Esophagus muscularis mucosa (tissue), 4 donors: ENCODE measurements at regions of chr11 and their contacts with region 1.

Region 1: DNA sequence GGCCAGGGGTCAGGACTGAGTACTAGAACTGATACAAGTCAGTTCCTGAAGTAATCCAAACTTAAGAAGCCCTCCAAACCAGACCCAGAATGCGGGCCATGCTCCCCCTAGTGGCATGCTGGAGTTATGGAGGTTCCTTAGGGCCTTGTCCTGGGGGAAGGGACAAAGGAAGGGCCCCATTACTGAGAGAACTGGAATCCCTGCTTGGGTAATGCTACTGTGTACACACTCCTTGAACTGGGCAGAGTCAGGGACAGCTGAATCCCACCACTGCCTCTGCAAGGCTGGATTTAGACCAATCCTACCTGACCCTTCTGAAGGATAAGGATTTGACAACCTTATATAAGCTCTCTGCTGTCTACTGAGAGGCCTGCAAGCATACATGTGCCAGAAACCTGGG is 97.3 kb upstream of the AKIP1 start:
- DNase-seq: no peak
- H3K4me3 ChIP-seq: no peak overlapping the region
- H3K27ac ChIP-seq: peak overlapping the region; percentile 90 to 95 (median 93)
- H3K4me1 ChIP-seq: peaks cover 30 to 44% (median 39%) of the 10 kb centered on the region in 4 donors
- H3K27me3 ChIP-seq: no peaks in the 10 kb centered on the region
- CTCF ChIP-seq: peak; percentile 84 to 93 (median 88)
- EP300 ChIP-seq: no peak
- POLR2A ChIP-seq: no peak

Region 2: DNA sequence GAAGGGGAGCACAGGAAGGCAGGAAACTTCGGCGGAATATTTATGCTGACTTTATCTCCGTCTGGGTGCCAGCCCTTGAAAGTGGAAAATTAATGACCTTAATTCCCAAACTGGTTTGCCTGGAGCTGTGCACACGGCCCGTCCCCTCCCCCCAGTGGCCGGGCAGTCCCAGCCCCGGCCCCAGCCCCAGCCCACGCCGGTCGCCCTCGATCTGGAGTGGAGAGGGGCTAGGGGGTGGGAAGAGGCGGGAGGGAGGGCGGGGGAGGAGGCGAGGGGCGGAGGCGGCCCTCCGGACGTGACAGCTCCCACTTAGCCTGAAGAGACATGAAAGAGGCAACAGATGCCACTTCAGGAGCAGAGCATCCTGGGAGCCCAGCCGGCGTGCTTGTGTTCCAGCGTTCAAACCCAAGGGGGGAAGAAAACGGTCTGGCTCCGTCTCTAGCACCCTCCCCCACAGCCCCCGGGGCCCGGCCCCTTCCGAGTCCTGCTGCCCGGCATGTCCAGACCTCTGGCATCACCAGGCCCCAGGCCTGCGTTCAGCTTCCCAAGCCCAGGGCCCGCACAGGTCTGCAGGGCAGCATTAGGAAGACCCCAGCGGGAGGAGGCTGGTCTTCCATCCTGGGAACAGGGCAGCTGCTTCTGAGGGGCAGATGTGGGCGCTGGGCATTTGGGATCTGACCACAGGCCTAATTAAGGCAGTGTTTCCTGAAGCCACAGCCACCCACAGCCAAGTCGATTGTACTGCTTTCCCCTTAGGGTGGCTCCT is 530.0 kb before region 1 on chr11:
- intact Hi-C with region 1: no loop called
- DNase-seq: no peak
- H3K4me3 ChIP-seq: peak overlapping the region; percentile 44 to 53 (median 46)
- H3K27ac ChIP-seq: no peak overlapping the region
- H3K4me1 ChIP-seq: peaks cover 0 to 18% (median 14%) of the 10 kb centered on the region in 4 donors
- H3K27me3 ChIP-seq: no peaks in the 10 kb centered on the region
- CTCF ChIP-seq: no peak
- EP300 ChIP-seq: no peak
- POLR2A ChIP-seq: no peak

Region 3: GRCh38 chr11:8593935-8594909 is 219.4 kb before region 1 on chr11 and contains the start of gene STK33:
- intact Hi-C with region 1: loop called (anchors 10 kb)
- DNase-seq: no peak
- H3K4me3 ChIP-seq: peak within 1 kb of the TSS; percentile 72 to 76 (median 74)
- H3K27ac ChIP-seq: peak within 1 kb of the TSS; percentile 56 to 84 (median 72)
- H3K4me1 ChIP-seq: peaks cover 7 to 36% (median 17%) of the 10 kb centered on the region in 4 donors
- H3K27me3 ChIP-seq: peaks cover 0 to 10% (median 3%) of the 10 kb centered on the region in 4 donors
- CTCF ChIP-seq: no peak
- EP300 ChIP-seq: no peak
- POLR2A ChIP-seq: no peak
- total RNA-seq, gene STK33: 12.7 to 29.1 (median 19.8) TPM

Region 4: DNA sequence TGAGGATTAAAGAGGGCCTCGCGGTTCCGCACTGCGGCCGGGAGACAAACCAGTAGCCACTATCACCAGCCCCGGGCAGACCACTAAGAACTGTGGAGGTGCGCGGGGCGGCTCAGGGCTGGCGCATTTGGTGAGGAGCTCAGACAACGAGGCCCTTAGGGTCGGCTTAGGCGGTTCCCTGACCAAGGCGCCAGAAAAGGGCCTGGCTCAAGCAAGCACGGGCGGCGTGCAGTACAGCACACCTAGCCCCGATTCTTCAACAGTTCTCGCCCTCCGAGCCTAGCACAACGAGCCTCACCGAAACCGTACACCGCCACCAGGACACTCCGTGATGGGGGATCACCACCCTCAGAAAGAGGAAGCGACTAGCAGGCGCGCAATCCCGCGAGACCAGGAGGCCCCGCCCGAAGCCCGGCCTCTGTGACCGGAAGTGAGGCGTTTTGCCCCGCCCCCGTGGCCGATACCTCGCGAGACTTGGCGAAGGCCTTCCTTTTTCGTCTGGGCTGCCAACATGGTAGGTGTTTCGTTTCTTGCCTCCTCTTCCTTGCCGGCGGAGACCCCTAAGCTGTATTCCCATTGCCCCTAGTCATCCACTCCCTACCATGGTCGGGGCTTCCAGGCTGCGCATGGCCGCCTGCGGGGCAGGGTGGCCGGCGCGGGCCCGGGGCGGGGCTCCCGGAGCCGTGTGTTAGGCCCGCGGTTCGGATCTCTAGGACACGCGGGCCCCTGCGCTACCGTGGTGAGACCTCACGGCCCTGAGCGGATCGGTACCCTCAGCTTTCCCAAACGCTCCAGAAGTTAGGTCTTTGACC is 131.1 kb before region 1 on chr11 and contains the starts of genes RPL27A and TRIM66:
- intact Hi-C with region 1: loop called (anchors 2 kb)
- DNase-seq: peak; percentile 100
- H3K4me3 ChIP-seq: peak within 1 kb of the TSS; percentile 79 to 92 (median 82)
- H3K27ac ChIP-seq: peak within 1 kb of the TSS; percentile 93 to 98 (median 95)
- H3K4me1 ChIP-seq: peaks cover 23 to 33% (median 32%) of the 10 kb centered on the region in 4 donors
- H3K27me3 ChIP-seq: no peaks in the 10 kb centered on the region
- CTCF ChIP-seq: peak in 1 of 3 experiments; percentile 37
- EP300 ChIP-seq: no peak
- POLR2A ChIP-seq: peak; percentile 99
- total RNA-seq, gene RPL27A: 665 to 1,629 (median 791) TPM
- total RNA-seq, gene TRIM66: 2.2 to 5.4 (median 3.1) TPM

Region 5: DNA sequence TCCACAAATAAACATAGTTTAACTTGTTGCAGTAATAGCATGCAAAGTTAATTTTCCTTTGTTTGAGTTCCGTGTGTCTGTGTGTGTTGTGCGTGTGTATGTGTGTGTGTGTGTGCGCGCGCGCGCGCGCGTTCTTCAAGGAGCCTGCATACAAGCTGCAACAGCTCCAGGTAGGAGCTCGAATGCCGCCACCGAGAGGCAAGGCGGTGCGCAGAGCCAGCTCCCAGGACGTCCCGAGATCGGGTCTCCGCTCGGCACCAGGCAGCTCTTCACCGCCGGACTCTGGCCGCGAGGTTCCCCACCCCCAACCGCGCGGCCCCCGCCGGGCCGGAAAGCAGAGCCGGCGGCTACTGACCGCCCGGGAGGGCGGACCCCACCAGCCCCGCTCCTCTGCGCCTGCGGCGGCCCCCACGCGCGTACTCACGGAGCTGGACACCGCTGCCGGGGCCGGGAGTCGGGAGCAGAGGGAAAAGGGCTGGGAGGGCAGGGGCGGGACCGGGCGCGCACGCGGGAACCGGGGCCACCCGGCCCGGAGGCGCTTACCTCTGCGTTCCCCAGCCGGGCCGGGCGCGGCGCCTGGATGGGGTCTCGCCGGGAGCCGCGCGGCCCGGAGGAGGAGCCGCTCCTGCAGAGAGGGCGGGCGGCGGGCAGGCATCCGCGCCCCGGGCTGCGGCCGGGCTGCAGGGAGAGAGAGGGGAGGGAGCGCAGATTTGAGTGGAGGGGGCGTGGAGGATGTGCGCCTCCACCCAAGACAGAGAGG is 56.9 kb after region 1 on chr11:
- intact Hi-C with region 1: loop called (anchors 5 kb)
- DNase-seq: no peak
- H3K4me3 ChIP-seq: peak overlapping the region; percentile 84 to 98 (median 92)
- H3K27ac ChIP-seq: peak overlapping the region; percentile 89 to 96 (median 92)
- H3K4me1 ChIP-seq: peaks cover 13 to 80% (median 64%) of the 10 kb centered on the region in 4 donors
- H3K27me3 ChIP-seq: no peaks in the 10 kb centered on the region
- CTCF ChIP-seq: no peak
- EP300 ChIP-seq: no peak
- POLR2A ChIP-seq: no peak

Region 6: GRCh38 chr11:8911029-8911826 is 97.6 kb after region 1 on chr11 and contains the start of gene AKIP1:
- intact Hi-C with region 1: loop called (anchors 5 kb)
- DNase-seq: peak; percentile 96
- H3K4me3 ChIP-seq: peak within 1 kb of the TSS; percentile 79 to 95 (median 92)
- H3K27ac ChIP-seq: peak within 1 kb of the TSS; percentile 91 to 98 (median 98)
- H3K4me1 ChIP-seq: peaks cover 20 to 50% (median 45%) of the 10 kb centered on the region in 4 donors
- H3K27me3 ChIP-seq: no peaks in the 10 kb centered on the region
- CTCF ChIP-seq: peak in 1 of 3 experiments; percentile 2
- EP300 ChIP-seq: no peak
- POLR2A ChIP-seq: peak; percentile 24
- total RNA-seq, gene AKIP1: 30.5 to 56.4 (median 41.7) TPM